ENCODE measurements at regions of chr2 and their contacts with region 1.

Region 1: GRCh38 chr2:226984750-226985582 is 149.1 kb downstream of the RHBDD1 start:
- DNase-seq: peak; percentile 83
- H3K4me3 ChIP-seq: peak overlapping the region; percentile 33
- H3K27ac ChIP-seq: peak overlapping the region; percentile 89
- H3K4me1 ChIP-seq: peaks cover 60% of the 10 kb centered on the region
- CTCF ChIP-seq: peak; percentile 95

Region 2: DNA sequence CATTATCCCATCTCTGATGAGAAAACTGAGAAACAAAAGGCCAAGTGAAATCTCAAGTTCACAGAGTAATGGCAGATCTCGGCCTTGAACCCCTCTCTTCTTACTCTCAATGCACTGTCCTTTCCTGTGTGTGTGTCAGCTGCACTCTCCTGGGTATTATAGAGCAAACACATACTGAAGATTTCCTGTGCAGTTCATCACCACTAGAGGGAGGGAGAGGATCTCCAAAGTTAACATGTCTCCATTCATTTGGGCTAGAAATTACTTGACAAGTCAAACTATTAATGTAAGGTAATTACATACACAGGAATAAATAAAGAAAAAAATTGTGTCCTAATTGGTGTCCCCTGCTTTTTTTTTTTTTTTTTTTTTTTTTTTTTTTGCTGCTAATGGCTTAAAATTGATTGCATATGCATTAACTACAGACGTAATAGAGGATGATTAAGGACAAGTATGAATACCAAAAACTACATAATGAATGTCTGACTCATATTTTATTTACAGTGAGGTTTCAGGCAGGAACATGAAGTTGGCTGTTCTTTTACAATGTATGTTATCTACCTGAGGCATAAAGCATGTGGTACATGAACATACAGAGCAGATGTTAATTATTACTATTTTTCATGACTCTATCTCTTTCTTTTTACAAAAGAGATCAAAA is 1316.2 kb before region 1 on chr2:
- CTCF ChIA-PET with region 1: no interaction called
- POLR2A ChIA-PET with region 1: no interaction called
- intact Hi-C with region 1: loop called (anchors 5 kb)
- DNase-seq: peak; percentile 70
- H3K4me3 ChIP-seq: no peak overlapping the region
- H3K27ac ChIP-seq: no peak overlapping the region
- H3K4me1 ChIP-seq: no peaks in the 10 kb centered on the region
- CTCF ChIP-seq: peak; percentile 86

Region 3: DNA sequence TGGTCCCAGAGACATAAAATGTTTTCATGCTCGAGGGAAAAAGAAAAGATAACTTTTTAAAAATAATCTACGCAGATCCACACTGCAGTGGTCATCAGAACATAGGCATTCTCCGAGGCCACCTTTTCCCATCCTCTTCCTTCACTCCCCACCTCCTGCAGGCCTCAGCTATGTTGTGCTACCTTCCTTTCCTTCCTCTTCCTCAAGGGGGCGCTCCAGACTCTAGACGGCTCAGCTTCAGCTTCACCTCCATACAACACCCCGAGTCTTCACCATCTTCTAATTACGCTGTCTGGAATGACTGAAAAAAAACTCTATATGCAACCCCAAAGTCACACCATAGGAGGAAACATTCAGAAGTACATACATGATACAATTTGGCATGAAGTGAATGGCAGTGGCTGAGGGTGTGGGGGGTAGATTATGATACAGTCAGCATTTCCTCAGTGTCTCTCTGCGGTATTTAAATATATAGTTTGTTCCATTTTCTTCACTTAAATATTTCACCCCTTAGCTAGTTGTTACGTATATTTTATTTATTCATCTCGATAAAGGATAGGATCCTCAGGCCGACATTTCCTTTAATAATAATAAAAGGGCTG is 769.0 kb before region 1 on chr2:
- CTCF ChIA-PET with region 1: no interaction called
- POLR2A ChIA-PET with region 1: no interaction called
- intact Hi-C with region 1: loop called (anchors 5 kb)
- DNase-seq: peak; percentile 56
- H3K4me3 ChIP-seq: no peak overlapping the region
- H3K27ac ChIP-seq: no peak overlapping the region
- H3K4me1 ChIP-seq: no peaks in the 10 kb centered on the region
- CTCF ChIP-seq: peak; percentile 91

Region 4: DNA sequence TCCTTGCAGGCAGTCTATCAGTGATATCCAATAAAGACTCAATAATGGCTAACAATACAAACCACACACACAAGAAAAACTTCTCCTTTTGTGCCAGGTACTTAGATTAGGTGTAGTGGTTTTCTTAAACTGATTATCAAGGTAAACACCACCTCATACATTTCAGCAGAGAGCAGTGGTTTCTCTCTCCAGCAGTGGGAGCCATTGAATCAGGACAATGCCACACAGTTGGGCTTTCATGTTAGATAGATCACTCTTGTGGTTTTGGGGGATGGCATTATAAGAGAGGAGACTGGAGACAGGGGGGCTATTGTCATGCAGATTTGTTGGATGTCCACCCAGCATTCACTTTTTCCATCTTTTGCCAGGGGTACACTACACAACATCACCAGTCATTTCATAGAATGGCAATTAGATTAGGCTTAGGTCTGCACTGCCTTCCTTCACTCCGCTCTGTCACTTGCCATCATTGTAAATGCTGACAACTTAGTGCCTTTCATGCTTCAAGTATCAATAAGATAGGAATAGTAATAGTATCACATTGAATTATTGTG is 171.7 kb before region 1 on chr2:
- CTCF ChIA-PET with region 1: no interaction called
- POLR2A ChIA-PET with region 1: interaction called, 4 read pairs
- intact Hi-C with region 1: loop called (anchors 1 kb)
- DNase-seq: peak; percentile 60
- H3K4me3 ChIP-seq: no peak overlapping the region
- H3K27ac ChIP-seq: no peak overlapping the region
- H3K4me1 ChIP-seq: no peaks in the 10 kb centered on the region
- CTCF ChIP-seq: peak; percentile 91

Region 5: DNA sequence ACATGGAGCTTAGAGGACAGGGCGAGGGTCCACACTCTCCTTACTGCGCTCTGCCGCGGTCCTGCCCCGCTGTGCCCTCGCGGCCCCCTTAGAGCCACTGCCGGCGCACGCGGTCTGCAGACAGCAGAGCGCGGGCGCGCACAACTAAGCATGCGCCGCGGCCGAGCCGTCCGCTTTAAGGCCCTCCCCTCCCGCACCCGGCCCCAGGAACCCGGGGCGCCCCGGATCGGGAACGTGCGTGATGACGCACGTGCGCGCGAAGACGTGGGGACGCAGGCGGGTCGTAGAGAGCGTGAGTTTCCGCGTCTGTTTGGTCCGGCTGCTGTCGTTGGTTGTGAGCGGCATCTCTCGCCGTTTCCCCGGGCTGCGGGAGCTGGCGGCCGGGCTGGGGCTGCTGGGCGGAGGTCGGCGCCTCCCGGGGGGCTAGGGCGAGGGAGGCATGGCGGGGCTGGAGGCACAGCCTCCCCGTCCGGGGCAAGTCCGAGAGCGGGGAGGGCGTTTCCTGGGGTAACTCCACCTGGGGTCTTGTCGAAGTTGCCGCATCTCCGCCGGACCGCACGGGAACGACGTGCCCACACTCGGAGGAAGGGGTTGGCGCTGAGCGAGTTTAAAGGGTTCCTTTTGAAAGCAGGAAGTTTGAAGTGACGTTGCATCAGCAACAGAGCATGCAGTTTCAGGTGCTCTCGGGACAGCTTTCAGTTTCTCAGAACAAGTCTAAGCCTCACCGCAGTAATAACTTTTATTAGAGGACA is 149.0 kb before region 1 on chr2 and contains the start of gene RHBDD1:
- CTCF ChIA-PET with region 1: no interaction called
- POLR2A ChIA-PET with region 1: interaction called, 35 read pairs
- intact Hi-C with region 1: loop called (anchors 1 kb)
- DNase-seq: peak; percentile 96
- H3K4me3 ChIP-seq: peak within 1 kb of the TSS; percentile 73
- H3K27ac ChIP-seq: peak within 1 kb of the TSS; percentile 97
- H3K4me1 ChIP-seq: peaks cover 53% of the 10 kb centered on the region
- CTCF ChIP-seq: no peak
- total RNA-seq, gene RHBDD1: 30.4 and 40.8 TPM in 2 replicates

Region 6: GRCh38 chr2:226916669-226917068 is 68.3 kb before region 1 on chr2:
- CTCF ChIA-PET with region 1: no interaction called
- POLR2A ChIA-PET with region 1: interaction called, 22 read pairs
- intact Hi-C with region 1: no loop called
- DNase-seq: peak; percentile 79
- H3K4me3 ChIP-seq: peak overlapping the region; percentile 12
- H3K27ac ChIP-seq: peak overlapping the region; percentile 75
- H3K4me1 ChIP-seq: peaks cover 59% of the 10 kb centered on the region
- CTCF ChIP-seq: peak; percentile 21; the same call in 1 of the 2 replicates

Region 7: GRCh38 chr2:226971084-226971483 is 13.9 kb before region 1 on chr2:
- CTCF ChIA-PET with region 1: no interaction called
- POLR2A ChIA-PET with region 1: interaction called, 16 read pairs
- intact Hi-C with region 1: loop called (anchors 1 kb)
- DNase-seq: peak; percentile 77
- H3K4me3 ChIP-seq: peak overlapping the region; percentile 57
- H3K27ac ChIP-seq: peak overlapping the region; percentile 99
- H3K4me1 ChIP-seq: peaks cover 77% of the 10 kb centered on the region
- CTCF ChIP-seq: no peak

Region 8: GRCh38 chr2:227000123-227000522 is 15.2 kb after region 1 on chr2:
- CTCF ChIA-PET with region 1: no interaction called
- POLR2A ChIA-PET with region 1: no interaction called
- intact Hi-C with region 1: no loop called
- DNase-seq: no peak
- H3K4me3 ChIP-seq: no peak overlapping the region
- H3K27ac ChIP-seq: no peak overlapping the region
- H3K4me1 ChIP-seq: no peaks in the 10 kb centered on the region
- CTCF ChIP-seq: no peak

Region 9: DNA sequence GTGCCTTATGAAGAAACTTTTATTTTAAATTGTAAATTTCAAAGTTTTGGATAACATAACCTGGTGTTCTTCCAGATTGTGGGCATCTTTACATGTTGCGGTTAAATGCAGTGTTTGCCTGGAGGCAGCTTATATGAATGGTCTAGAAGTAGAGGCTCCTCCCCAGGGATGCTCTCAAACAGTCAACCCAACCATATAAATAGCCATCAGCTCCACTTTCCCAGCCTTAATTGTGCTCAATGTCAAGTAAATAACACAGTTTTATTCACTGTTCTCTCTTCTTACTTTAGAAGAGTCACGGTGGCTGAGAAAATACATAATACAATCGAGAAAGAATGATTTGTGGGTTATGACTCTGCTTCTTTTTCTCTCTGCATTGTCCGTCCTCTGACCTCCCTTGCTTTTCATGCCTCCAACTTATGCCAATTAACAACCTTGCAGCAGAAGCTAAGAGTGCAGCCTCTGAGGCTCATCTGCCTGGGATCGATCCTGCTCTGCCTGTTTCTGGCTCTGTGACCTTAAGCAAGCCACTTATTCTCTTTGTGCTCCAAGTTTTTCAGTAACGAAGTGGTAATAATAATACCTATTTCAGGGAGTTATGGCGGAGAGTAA is 986.8 kb after region 1 on chr2:
- CTCF ChIA-PET with region 1: no interaction called
- POLR2A ChIA-PET with region 1: no interaction called
- intact Hi-C with region 1: no loop called
- DNase-seq: no peak
- H3K4me3 ChIP-seq: no peak overlapping the region
- H3K27ac ChIP-seq: no peak overlapping the region
- H3K4me1 ChIP-seq: no peaks in the 10 kb centered on the region
- CTCF ChIP-seq: no peak

Measured in OCI-LY7 (cell line).